Transverse colon (tissue), 4 donors: ENCODE measurements at regions of chr1 and their contacts with region 1.

Region 1: DNA sequence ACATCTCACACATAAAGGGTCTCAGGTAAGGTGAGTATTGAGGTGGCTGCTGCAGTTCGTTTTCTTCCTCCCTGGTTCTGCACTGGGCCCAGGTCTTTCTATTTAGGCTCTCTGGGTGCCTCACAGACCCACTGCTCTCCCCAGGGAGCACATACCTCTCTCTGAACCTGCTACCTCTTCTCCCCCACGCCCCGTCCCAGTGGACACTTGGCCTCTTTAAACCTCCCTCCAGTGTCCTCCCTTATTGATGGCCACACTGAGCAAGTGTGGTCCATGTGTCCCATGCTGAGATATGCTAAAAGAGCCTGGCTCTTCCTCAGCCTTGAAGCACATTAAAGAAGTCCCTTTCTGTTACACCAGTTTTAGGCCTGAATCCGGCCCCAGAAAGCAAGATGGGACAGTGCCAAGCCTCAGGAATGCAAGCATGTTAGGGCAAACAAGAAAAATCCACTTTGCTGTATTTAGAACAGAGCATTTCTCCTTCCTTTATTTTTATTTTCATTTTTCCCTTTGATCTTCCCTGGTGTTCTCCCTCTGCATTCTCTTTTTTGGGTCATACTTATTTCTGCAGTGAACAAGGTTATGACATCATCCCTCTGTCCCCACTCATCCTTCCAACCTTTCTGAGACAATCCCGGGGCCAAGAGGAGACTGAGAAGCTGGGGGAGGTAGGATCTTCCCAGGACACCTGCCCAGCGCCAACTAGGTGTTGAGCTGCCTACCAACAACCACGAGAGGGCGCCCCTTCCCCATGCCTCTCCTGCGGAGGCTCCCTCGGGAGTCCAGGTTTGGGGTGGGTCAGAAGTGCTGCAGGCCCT is 5.0 kb upstream of the CHI3L2 start:
- DNase-seq: peak; percentile 86
- H3K4me3 ChIP-seq: no peak overlapping the region
- H3K27ac ChIP-seq: peak overlapping the region; percentile 8 to 48 (median 10)
- H3K4me1 ChIP-seq: peaks cover 0 to 23% (median 6%) of the 10 kb centered on the region in 4 donors
- H3K27me3 ChIP-seq: no peaks in the 10 kb centered on the region
- CTCF ChIP-seq: peak; percentile 84 to 92 (median 90)
- EP300 ChIP-seq: no peak
- POLR2A ChIP-seq: no peak

Region 2: GRCh38 chr1:111399792-111400610 is 177.5 kb after region 1 on chr1:
- in situ Hi-C with region 1: loop called (anchors 5 to 10 kb)
- intact Hi-C with region 1: loop called (anchors 5 kb)
- DNase-seq: peak; percentile 38
- H3K4me3 ChIP-seq: no peak overlapping the region
- H3K27ac ChIP-seq: no peak overlapping the region
- H3K4me1 ChIP-seq: no peaks in the 10 kb centered on the region
- H3K27me3 ChIP-seq: peaks cover 22% of the 10 kb centered on the region
- CTCF ChIP-seq: peak; percentile 69 to 73 (median 72)
- EP300 ChIP-seq: no peak
- POLR2A ChIP-seq: no peak

Region 3: GRCh38 chr1:111619635-111620440 is 397.3 kb after region 1 on chr1 and contains the start of gene RAP1A:
- in situ Hi-C with region 1: loop called in 1 of 4 experiments (anchors 25 kb)
- intact Hi-C with region 1: no loop called
- DNase-seq: peak; percentile 98
- H3K4me3 ChIP-seq: peak within 1 kb of the TSS; percentile 62 to 99 (median 78)
- H3K27ac ChIP-seq: peak within 1 kb of the TSS; percentile 97 to 100 (median 98)
- H3K4me1 ChIP-seq: peaks cover 10 to 62% (median 36%) of the 10 kb centered on the region in 4 donors
- H3K27me3 ChIP-seq: no peaks in the 10 kb centered on the region
- CTCF ChIP-seq: no peak
- EP300 ChIP-seq: no peak
- POLR2A ChIP-seq: peak; percentile 89
- total RNA-seq, gene RAP1A: 34.0 to 87.2 (median 57.7) TPM

Region 4: GRCh38 chr1:111769517-111770146 is 547.1 kb after region 1 on chr1:
- in situ Hi-C with region 1: loop called in 2 of 4 experiments (anchors 10 to 25 kb)
- intact Hi-C with region 1: no loop called
- DNase-seq: peak; percentile 26
- H3K4me3 ChIP-seq: no peak overlapping the region
- H3K27ac ChIP-seq: no peak overlapping the region
- H3K4me1 ChIP-seq: no peaks in the 10 kb centered on the region
- H3K27me3 ChIP-seq: no peaks in the 10 kb centered on the region
- CTCF ChIP-seq: peak; percentile 74 to 93 (median 79)
- EP300 ChIP-seq: no peak
- POLR2A ChIP-seq: no peak